Posterior vena cava (tissue), 2 donors: ENCODE measurements at regions of chr11 and their contacts with region 1.

Region 1: DNA sequence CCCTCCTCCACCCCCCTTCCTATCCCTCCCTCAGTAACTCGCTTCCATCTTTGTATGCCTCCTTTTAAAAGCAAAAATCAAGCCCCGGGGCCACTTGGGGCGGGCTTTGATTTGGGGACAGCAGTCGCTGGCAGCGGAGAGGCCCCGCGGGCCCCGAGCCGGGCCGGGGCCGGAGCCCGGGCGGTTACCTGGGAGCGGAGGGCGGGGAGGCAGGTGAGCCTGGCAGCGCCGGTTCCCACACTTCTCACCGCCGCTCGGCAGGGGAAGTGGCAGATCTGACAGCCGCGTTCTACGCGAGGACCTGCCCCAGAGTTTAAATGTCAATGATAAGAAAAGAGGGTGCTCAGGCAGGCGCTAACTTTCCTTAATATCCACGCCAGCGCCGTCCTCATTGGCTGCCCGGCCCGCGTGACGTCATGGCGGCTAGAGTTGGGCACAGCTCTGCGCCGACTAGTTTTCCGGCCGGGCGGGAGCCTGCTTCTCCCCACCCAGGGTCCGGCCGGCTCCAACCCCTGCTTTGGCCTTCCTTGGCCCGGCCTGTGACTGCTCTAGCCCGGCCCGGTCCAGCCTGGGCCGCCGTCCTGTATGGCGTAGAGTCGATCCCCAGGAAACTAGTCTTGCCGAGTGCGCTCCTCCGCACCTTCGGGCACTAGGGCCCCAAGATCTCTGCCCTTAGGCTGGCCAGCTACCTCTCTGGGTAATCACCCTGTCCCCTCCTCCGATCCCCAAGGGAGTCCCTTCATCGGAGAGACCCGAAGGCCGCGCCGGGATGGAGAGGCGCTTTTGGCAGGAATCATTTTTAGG is 6.7 kb upstream of the PAX6 start:
- DNase-seq: no peak

Region 2: DNA sequence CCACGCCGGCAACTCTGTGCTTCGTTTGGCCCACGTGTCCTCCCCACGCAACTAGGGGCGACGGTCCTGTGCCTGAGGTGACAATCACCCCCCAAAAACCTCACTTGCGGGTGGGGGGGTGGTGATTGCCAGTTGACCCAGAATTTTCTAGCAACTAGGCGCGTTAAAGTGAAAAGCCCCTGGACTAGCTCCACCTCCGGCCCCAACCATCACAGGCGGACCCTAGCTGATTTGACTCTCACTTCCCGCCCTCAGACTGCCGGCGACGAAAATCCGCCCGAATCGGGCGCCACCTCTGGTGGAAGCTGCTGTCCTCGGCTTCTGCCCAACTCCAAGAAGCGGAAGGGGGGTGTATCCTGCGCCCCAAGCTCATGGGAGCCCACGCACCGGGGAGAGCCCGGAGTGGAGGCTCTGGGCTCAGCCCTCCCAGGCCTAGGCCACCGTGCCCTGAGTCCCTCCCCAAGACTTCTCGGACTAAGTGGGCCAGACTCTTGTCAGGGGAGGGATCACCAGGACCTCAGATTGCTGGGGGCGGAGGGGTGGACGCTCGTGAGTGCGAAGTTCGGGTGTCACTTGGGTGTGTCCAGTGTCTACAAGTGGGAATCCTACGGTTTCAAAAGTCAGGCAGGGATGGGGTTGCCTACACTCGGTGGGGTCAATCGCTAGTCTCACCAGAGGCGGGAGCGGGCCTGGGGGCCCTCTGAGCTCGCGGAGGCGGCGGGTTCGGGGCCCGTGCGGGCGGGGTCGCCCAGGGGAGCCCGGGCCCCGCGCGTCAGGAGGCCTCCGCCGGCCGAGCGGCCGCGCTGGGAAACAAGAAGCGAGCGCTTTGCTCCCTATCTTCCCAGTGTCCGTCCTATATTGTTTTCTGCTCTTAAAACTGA is 19.0 kb before region 1 on chr11:
- intact Hi-C with region 1: loop called in 1 of 2 experiments (anchors 2 kb)
- DNase-seq: peak; percentile 75